ENCODE measurements at regions of chr17 and their contacts with region 1.

Region 1: GRCh38 chr17:50213026-50214022 is 11.9 kb upstream of the COL1A1 start:
- DNase-seq: peak; percentile 79
- CTCF ChIP-seq: peak; percentile 3

Region 2: DNA sequence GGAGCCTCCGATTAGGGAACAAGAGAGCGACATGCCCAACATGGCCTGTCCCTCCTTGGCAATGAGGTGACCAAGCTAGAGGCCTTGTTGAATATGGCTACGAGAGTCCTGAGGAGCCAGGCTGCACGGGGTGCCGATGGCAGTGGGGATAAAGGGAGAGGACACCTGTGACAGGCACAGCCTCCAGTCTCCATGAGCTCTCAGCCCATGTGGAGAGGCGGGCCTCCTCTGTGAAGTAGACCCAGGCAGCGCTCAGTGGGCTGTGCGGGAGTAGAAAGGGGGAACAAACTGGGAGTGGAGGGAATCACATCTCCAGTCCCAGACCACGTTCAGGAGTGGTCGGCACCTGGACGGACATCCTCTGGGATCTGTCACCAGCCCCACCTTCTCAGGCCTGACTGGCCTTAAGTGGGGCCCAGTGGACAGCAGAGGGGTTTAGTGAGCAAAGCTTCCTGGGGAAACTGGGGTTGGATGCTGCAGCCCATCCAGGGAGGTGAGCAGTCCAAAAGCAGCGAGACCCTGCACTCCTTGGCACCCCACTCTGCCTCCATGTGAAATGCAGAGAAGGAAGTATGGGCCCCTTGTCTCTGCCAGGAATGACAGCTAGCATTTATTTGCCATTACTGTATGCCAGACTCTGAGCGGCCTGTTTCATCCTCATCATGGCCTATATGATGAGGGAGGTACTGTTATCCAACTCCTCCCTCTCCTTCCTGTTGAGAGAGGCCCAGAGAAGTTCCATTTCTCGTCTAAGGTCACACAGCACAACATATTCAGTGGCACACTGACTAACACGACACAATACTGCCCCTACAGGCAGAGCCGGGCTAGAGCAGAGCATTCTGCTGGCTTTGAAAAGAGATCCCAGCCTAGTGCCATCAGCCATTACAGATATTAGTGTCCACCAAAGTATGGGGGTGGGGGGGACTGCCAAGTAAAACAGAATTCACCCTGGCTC is 56.4 kb after region 1 on chr17:
- in situ Hi-C with region 1: loop called (anchors 10 kb)
- DNase-seq: peak; percentile 82
- CTCF ChIP-seq: peak; percentile 72

Region 3: GRCh38 chr17:50468409-50469207 is 255.3 kb after region 1 on chr17 and contains the start of gene CHAD:
- in situ Hi-C with region 1: no loop called
- DNase-seq: peak; percentile 57
- CTCF ChIP-seq: no peak

Measured in GM13976 (cell line).